Dendritic cell treated with granulocyte-macrophage colony-stimulating factor and Interleukin-4, amounts not matched to agents 40 ng/mL and 50 ng/mL, for 4 days (primary cell): ENCODE measurements at regions of chr12 and their contacts with region 1.

Region 1: GRCh38 chr12:48336562-48336961 is 14.2 kb downstream of the ZNF641 start:
- H3K4me3 Mint-ChIP-seq: peak overlapping the region; percentile 33
- H3K27ac Mint-ChIP-seq: peak overlapping the region; percentile 74
- H3K4me1 Mint-ChIP-seq: peaks cover 57% of the 10 kb centered on the region
- H3K27me3 Mint-ChIP-seq: peaks cover 1% of the 10 kb centered on the region

Region 2: GRCh38 chr12:48197971-48198671 is 138.4 kb before region 1 on chr12:
- intact Hi-C with region 1: loop called (anchors 5 kb)
- H3K4me3 Mint-ChIP-seq: peak overlapping the region; percentile 87
- H3K27ac Mint-ChIP-seq: peak overlapping the region; percentile 99
- H3K4me1 Mint-ChIP-seq: peaks cover 38% of the 10 kb centered on the region
- H3K27me3 Mint-ChIP-seq: peaks cover 8% of the 10 kb centered on the region